ENCODE measurements at regions of chr16 and their contacts with region 1.

Region 1: DNA sequence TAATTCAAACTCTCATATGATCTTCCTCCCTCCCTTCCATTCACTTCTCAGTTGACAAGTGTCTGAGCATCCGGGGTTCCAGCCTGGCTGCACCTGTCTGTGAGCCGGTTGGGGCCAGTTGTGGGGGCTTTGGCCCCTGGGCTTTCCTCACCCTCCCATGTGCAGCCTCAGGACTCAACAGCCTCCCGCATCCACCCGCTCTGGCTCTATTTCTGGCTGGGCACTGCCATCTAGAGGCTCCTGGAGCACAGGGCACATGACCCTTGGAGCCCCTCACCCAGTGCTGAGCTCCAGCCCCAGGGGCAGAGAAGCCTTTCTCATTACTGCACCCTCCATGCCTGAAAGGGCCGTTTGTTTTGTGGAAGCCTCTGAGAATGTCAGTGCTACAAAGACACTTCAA is 43.3 kb downstream of the HAPSTR1 start:
- DNase-seq: peak; percentile 83
- ATAC-seq: peak; percentile 88
- H3K4me3 Mint-ChIP-seq: no peak overlapping the region
- H3K27ac Mint-ChIP-seq: no peak overlapping the region
- H3K4me1 Mint-ChIP-seq: peaks cover 24% of the 10 kb centered on the region
- H3K27me3 Mint-ChIP-seq: no peaks in the 10 kb centered on the region

Region 2: GRCh38 chr16:8674413-8675022 is 460.2 kb before region 1 on chr16 and contains the start of gene ABAT:
- CTCF ChIA-PET with region 1: no interaction called
- POLR2A ChIA-PET with region 1: no interaction called
- intact Hi-C with region 1: loop called in 1 of 2 experiments (anchors 10 kb)
- DNase-seq: peak; percentile 93
- ATAC-seq: peak; percentile 96
- H3K4me3 Mint-ChIP-seq: peak within 1 kb of the TSS; percentile 83
- H3K27ac Mint-ChIP-seq: peak within 1 kb of the TSS; percentile 92
- H3K4me1 Mint-ChIP-seq: peaks cover 18% of the 10 kb centered on the region
- H3K27me3 Mint-ChIP-seq: no peaks in the 10 kb centered on the region
- total RNA-seq, gene ABAT: 5.4 to 6.0 TPM

Region 3: DNA sequence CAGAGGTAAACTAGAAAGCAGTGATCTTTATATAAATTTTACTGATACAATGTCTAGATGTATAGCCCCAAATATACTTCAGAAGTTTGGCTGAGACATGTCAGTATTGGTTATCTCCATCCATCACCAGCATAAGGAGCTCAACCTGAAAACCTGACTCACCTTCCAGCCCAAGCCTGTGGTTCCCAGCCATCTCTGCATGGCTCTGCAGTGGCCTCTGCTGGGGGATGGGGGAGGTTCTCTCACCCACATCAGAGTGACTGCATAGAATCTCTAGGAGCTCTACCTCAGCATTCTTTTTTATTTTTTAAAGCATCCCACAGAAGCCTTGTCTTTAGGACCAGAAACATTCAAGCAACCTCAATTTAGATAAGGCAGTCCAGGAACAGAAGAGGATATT is 198.3 kb before region 1 on chr16:
- CTCF ChIA-PET with region 1: interaction called, 8 read pairs
- POLR2A ChIA-PET with region 1: interaction called, 5 read pairs
- intact Hi-C with region 1: loop called in 1 of 2 experiments (anchors 1 kb)
- DNase-seq: peak; percentile 92
- ATAC-seq: peak; percentile 100
- H3K4me3 Mint-ChIP-seq: no peak overlapping the region
- H3K27ac Mint-ChIP-seq: peak overlapping the region; percentile 78
- H3K4me1 Mint-ChIP-seq: peaks cover 81% of the 10 kb centered on the region
- H3K27me3 Mint-ChIP-seq: no peaks in the 10 kb centered on the region

Region 4: DNA sequence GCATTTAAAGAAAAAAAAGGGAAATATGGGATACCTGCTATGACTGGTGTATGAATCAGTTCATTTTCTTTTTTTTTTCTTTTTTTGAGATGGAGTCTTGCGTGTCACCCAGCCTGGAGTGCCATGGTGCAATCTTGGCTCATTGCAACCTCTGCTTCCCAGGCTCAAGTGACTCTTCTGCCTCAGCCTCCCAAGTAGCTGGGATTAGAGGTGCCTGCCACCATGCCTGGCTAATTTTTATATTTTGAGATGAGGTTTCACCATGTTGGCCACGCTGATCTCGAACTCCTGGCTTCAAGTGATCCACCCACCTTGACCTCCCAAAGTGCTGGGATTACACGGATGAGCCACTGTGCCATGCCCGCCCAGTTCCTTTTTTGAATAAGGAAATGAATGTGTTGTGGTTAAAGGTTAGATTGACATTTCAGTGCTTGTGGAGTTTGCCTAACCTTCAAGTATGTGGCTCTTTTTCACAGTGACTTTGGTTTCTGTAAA is 35.6 kb before region 1 on chr16:
- CTCF ChIA-PET with region 1: interaction called, 10 read pairs
- POLR2A ChIA-PET with region 1: no interaction called
- intact Hi-C with region 1: loop called in 1 of 2 experiments (anchors 5 kb)
- DNase-seq: peak; percentile 59
- ATAC-seq: peak; percentile 73
- H3K4me3 Mint-ChIP-seq: peak overlapping the region; percentile 52
- H3K27ac Mint-ChIP-seq: peak overlapping the region; percentile 83
- H3K4me1 Mint-ChIP-seq: peaks cover 88% of the 10 kb centered on the region
- H3K27me3 Mint-ChIP-seq: no peaks in the 10 kb centered on the region

Region 5: GRCh38 chr16:9225611-9226316 is 91.0 kb after region 1 on chr16:
- CTCF ChIA-PET with region 1: interaction called, 4 read pairs
- POLR2A ChIA-PET with region 1: no interaction called
- intact Hi-C with region 1: loop called in 1 of 2 experiments (anchors 1 kb)
- DNase-seq: peak; percentile 13
- ATAC-seq: no peak
- H3K4me3 Mint-ChIP-seq: no peak overlapping the region
- H3K27ac Mint-ChIP-seq: no peak overlapping the region
- H3K4me1 Mint-ChIP-seq: no peaks in the 10 kb centered on the region
- H3K27me3 Mint-ChIP-seq: peaks cover 4% of the 10 kb centered on the region

Region 6: GRCh38 chr16:10509534-10510025 is 1374.8 kb after region 1 on chr16:
- CTCF ChIA-PET with region 1: no interaction called
- POLR2A ChIA-PET with region 1: no interaction called
- intact Hi-C with region 1: loop called in 1 of 2 experiments (anchors 10 kb)
- DNase-seq: peak; percentile 75
- ATAC-seq: peak; percentile 76
- H3K4me3 Mint-ChIP-seq: no peak overlapping the region
- H3K27ac Mint-ChIP-seq: peak overlapping the region; percentile 69
- H3K4me1 Mint-ChIP-seq: peaks cover 28% of the 10 kb centered on the region
- H3K27me3 Mint-ChIP-seq: no peaks in the 10 kb centered on the region